ENCODE measurements at regions of chr1 and their contacts with region 1.

Region 1: GRCh38 chr1:117367047-117368018 is at the start of gene MAN1A2:
- DNase-seq: peak; percentile 59 to 91
- H3K4me3 ChIP-seq: peak within 1 kb of the TSS; percentile 84 to 86
- H3K27ac ChIP-seq: peak within 1 kb of the TSS; percentile 97 to 98
- H3K4me1 ChIP-seq: peaks cover 7 to 14% of the 10 kb centered on the region in 2 donors
- H3K27me3 ChIP-seq: no peaks in the 10 kb centered on the region
- CTCF ChIP-seq: no peak
- total RNA-seq, gene MAN1A2: 25.4 TPM

Region 2: GRCh38 chr1:116570358-116571200 is 796.8 kb before region 1 on chr1 and contains the start of gene CD58:
- intact Hi-C with region 1: loop called (anchors 5 kb)
- DNase-seq: peak; percentile 55 to 95
- H3K4me3 ChIP-seq: peak within 1 kb of the TSS; percentile 91 to 92
- H3K27ac ChIP-seq: peak within 1 kb of the TSS; percentile 99 to 100
- H3K4me1 ChIP-seq: peaks cover 0 to 11% of the 10 kb centered on the region in 2 donors
- H3K27me3 ChIP-seq: no peaks in the 10 kb centered on the region
- CTCF ChIP-seq: peak; percentile 73 to 81 (median 78)
- total RNA-seq, gene CD58: 50.7 TPM

Region 3: DNA sequence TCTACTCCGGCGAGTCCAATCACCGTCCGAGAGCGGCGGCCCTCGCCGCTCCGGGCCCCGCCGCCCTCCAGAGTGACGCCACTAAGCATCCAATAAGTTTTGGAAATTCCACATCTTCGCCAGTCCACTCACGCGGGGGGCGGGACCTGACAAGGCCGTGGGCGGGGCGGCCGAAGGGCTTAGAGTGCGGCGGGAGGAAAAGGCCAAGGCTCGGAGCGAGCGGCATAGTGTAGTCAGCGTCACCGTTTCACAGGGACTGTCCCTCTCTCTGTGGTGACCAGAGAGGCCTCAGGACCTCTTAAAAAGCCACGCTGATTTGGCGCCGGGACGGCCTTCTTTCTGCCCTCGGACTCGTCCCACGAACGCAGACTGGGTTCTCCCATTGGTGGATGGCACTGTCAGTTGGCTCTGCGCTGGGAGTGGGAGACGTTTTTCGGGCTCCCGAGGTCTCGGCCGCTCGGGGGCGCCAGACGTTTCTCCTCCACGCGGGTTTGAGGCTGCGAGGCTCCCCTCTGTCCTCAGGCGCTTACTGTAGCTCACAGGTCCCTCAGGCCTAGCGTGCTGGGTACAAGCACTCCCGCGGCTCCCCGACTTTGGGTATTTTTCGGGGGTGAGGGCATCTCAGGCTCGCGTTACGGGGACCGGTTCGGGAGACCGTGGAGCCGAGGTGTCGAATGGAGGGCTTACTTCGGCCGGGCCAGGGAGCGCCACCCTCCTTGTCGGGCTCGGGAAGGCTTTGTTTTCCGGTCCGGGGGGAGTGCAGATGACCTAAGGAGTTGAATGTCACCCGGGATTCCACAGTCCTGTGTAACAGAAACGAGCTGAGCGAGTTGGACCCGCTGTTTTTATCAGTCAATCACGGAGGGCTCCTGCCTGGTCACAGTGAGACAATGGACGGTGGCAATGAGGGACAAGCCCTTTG is 245.3 kb before region 1 on chr1:
- intact Hi-C with region 1: loop called (anchors 2 kb)
- DNase-seq: peak; percentile 86 to 99
- H3K4me3 ChIP-seq: peak overlapping the region; percentile 73 to 90
- H3K27ac ChIP-seq: peak overlapping the region; percentile 86 to 88
- H3K4me1 ChIP-seq: peaks cover 3 to 5% of the 10 kb centered on the region in 2 donors
- H3K27me3 ChIP-seq: no peaks in the 10 kb centered on the region
- CTCF ChIP-seq: peak; percentile 66 to 86 (median 80)

Region 4: GRCh38 chr1:117339866-117340700 is 27.2 kb before region 1 on chr1:
- intact Hi-C with region 1: no loop called
- DNase-seq: no peak
- H3K4me3 ChIP-seq: no peak overlapping the region
- H3K27ac ChIP-seq: no peak overlapping the region
- H3K4me1 ChIP-seq: no peaks in the 10 kb centered on the region
- H3K27me3 ChIP-seq: no peaks in the 10 kb centered on the region
- CTCF ChIP-seq: no peak

Region 5: GRCh38 chr1:117929173-117929989 is 562.0 kb after region 1 on chr1 and contains the starts of genes GDAP2 and WDR3:
- intact Hi-C with region 1: loop called (anchors 5 kb)
- DNase-seq: peak; percentile 83 to 98
- H3K4me3 ChIP-seq: peak within 1 kb of the TSS; percentile 82 to 91
- H3K27ac ChIP-seq: peak within 1 kb of the TSS; percentile 86 to 95
- H3K4me1 ChIP-seq: peaks cover 6 to 16% of the 10 kb centered on the region in 2 donors
- H3K27me3 ChIP-seq: no peaks in the 10 kb centered on the region
- CTCF ChIP-seq: no peak
- total RNA-seq, gene GDAP2: 9.5 TPM
- total RNA-seq, gene WDR3: 4.3 TPM

Measured in ascending aorta (tissue), 2 donors.